WTC11 (cell line): ENCODE measurements at regions of chr12 and their contacts with region 1.

Region 1: GRCh38 chr12:95072900-95073697 is at the start of gene NR2C1:
- DNase-seq: peak; percentile 95
- ATAC-seq: peak; percentile 96
- H3K4me3 Mint-ChIP-seq: peak within 1 kb of the TSS; percentile 92
- H3K27ac Mint-ChIP-seq: peak within 1 kb of the TSS; percentile 90
- H3K4me1 Mint-ChIP-seq: no peaks in the 10 kb centered on the region; the same call in 1 of the 2 replicates
- H3K27me3 Mint-ChIP-seq: no peaks in the 10 kb centered on the region; the same call in 1 of the 2 replicates
- CTCF ChIP-seq: no peak; the same call in 1 of the 2 replicates
- total RNA-seq, gene NR2C1: 45.4 to 53.0 TPM (median 51.1 TPM) in 3 replicates

Region 2: DNA sequence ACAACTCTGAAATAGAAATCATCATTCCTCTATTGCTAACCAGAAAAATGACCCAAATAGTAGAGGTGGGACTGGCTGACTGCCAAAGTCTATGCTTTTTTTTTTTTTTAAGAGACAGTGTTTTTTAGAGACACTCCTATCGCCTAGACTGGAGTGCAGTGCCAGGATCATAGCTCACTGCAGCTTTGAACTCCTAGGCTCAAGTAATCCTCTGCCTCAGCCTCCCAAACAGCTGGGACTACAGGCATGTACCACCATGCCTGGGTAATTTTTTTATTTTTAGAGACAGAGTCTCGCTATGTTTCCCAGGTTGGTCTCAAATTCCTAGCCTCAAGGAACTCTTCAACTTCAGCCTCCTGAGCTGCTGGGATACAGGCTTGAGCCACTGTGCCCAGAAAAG is 18.9 kb before region 1 on chr12:
- CTCF ChIA-PET with region 1: no interaction called
- POLR2A ChIA-PET with region 1: no interaction called
- DNase-seq: no peak
- ATAC-seq: no peak
- H3K4me3 Mint-ChIP-seq: no peak overlapping the region
- H3K27ac Mint-ChIP-seq: no peak overlapping the region
- H3K4me1 Mint-ChIP-seq: no peaks in the 10 kb centered on the region
- H3K27me3 Mint-ChIP-seq: no peaks in the 10 kb centered on the region
- CTCF ChIP-seq: no peak

Region 3: DNA sequence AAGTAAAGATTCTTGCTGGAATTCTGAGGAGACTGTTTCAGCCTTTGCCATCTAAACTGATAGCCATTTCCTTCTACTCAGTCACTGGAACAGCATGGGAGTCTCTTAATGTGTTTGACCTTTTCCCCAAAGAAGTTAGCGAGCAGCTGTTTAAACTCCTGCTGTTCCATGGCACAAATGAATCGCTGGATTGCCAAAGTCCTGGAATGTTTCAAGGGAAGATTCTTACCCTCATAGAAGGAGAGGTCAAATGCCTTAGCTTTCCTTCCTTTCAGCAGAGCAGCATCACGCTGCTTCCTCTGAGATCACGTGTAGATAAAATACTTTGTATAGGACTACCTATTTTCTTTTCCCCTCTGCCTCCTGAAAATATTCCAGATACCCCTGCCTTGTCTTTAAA is 10.8 kb after region 1 on chr12:
- CTCF ChIA-PET with region 1: interaction called, 12 read pairs
- POLR2A ChIA-PET with region 1: no interaction called
- DNase-seq: no peak
- ATAC-seq: peak; percentile 78
- H3K4me3 Mint-ChIP-seq: no peak overlapping the region
- H3K27ac Mint-ChIP-seq: peak overlapping the region; percentile 73; the same call in 1 of the 2 replicates
- H3K4me1 Mint-ChIP-seq: peaks cover 14% of the 10 kb centered on the region
- H3K27me3 Mint-ChIP-seq: no peaks in the 10 kb centered on the region
- CTCF ChIP-seq: no peak

Region 4: DNA sequence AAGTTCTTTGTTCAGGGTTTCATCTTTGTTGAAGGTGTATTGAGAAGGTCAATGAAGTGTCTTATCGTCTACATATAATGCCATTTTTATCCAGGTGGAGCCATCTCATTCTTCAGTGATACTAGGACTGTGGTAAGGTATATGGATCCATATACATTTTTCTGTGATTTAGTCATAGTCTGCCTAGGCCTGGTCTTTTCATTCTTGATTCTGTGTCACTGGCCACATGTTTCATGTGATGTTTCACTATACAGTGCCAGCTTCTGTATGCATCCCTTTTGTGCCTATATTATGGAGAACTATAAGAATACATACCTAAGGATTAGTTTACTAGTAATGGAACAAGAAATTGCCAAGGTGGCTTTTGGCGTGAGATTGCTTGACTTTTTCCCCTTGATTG is 185.1 kb after region 1 on chr12:
- CTCF ChIA-PET with region 1: no interaction called
- POLR2A ChIA-PET with region 1: no interaction called
- DNase-seq: no peak
- ATAC-seq: no peak
- H3K4me3 Mint-ChIP-seq: no peak overlapping the region
- H3K27ac Mint-ChIP-seq: 0 out of 2 replicates have a peak overlapping the region, but pooled peaks have one; percentile 28
- H3K4me1 Mint-ChIP-seq: peaks cover 31% of the 10 kb centered on the region
- H3K27me3 Mint-ChIP-seq: no peaks in the 10 kb centered on the region
- CTCF ChIP-seq: no peak